ENCODE measurements at regions of chr2 and their contacts with region 1.

Region 1: DNA sequence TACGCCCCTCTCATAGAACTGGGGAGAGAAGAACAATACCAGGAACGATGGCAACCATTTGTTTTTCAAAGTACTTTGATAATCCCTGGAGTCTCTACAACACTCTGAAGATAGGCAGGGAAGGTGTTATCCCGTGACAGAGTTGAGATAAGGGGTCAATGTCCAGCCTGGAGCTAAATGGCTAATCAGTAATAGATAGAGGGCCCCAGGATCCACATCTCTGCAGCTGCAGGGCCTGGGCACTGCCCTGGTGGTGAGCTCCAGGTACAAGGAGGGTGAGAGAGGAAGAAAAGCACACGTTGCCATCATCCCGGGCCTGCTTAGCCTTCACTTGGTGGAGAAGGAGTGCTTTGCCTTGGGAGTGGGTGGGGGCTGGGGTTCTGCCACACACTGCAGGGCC is 260.6 kb downstream of the PRKCE start:
- DNase-seq: peak; percentile 87
- ATAC-seq: peak; percentile 99
- H3K4me3 ChIP-seq: no peak overlapping the region
- H3K27ac ChIP-seq: no peak overlapping the region
- H3K4me1 ChIP-seq: peaks cover 20% of the 10 kb centered on the region
- H3K27me3 ChIP-seq: no peaks in the 10 kb centered on the region; a peak in 1 of 5 replicates
- CTCF ChIP-seq: no peak; the same call in 1 of the 2 replicates
- EP300 ChIP-seq: peak in 1 of 2 experiments; percentile 63; a peak in 1 of 4 replicates
- POLR2A ChIP-seq: peak in 1 of 2 experiments; percentile 47; a peak in 2 of 4 replicates
- RAD21 ChIP-seq: peak; percentile 37; the same call in 1 of the 2 replicates

Region 2: DNA sequence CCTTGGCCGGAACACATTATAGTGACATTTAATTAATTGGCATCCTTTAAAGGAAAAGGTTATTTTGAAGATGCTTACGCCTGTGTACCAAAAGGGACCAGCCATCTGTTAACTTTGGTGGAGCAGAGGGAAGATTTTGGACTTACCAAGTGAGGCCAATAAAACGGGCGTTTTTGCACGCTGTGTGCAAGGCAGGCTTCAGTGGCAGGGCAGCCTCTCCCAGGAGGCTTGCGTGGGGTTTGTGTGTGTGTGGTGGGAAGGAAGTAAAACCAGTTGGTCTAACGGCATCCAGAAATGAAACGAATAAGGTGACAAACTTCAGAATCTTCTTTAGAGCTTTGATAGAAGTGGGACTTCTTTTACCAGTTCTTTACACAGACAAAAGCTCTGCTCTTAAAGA is 69.0 kb before region 1 on chr2:
- CTCF ChIA-PET with region 1: no interaction called
- POLR2A ChIA-PET with region 1: no interaction called
- in situ Hi-C with region 1: no loop called
- intact Hi-C with region 1: no loop called
- DNase-seq: no peak
- ATAC-seq: no peak
- H3K4me3 ChIP-seq: no peak overlapping the region
- H3K27ac ChIP-seq: no peak overlapping the region
- H3K4me1 ChIP-seq: no peaks in the 10 kb centered on the region
- H3K27me3 ChIP-seq: no peaks in the 10 kb centered on the region; a peak in 1 of 5 replicates
- CTCF ChIP-seq: no peak
- EP300 ChIP-seq: no peak
- POLR2A ChIP-seq: no peak
- RAD21 ChIP-seq: no peak

Region 3: GRCh38 chr2:45876611-45877010 is 35.5 kb before region 1 on chr2:
- CTCF ChIA-PET with region 1: no interaction called
- POLR2A ChIA-PET with region 1: no interaction called
- in situ Hi-C with region 1: no loop called
- intact Hi-C with region 1: loop called (anchors 1 kb)
- DNase-seq: no peak
- ATAC-seq: no peak
- H3K4me3 ChIP-seq: no peak overlapping the region
- H3K27ac ChIP-seq: no peak overlapping the region
- H3K4me1 ChIP-seq: no peaks in the 10 kb centered on the region
- H3K27me3 ChIP-seq: no peaks in the 10 kb centered on the region
- CTCF ChIP-seq: no peak
- EP300 ChIP-seq: no peak
- POLR2A ChIP-seq: no peak
- RAD21 ChIP-seq: no peak